OCI-LY7 (cell line): ENCODE measurements at regions of chr17 and their contacts with region 1.

Region 1: GRCh38 chr17:51238255-51238887 is 21.5 kb downstream of the MBTD1 start:
- DNase-seq: peak; percentile 78
- H3K4me3 ChIP-seq: peak overlapping the region; percentile 58
- H3K27ac ChIP-seq: peak overlapping the region; percentile 84
- H3K4me1 ChIP-seq: peaks cover 56% of the 10 kb centered on the region
- CTCF ChIP-seq: no peak

Region 2: DNA sequence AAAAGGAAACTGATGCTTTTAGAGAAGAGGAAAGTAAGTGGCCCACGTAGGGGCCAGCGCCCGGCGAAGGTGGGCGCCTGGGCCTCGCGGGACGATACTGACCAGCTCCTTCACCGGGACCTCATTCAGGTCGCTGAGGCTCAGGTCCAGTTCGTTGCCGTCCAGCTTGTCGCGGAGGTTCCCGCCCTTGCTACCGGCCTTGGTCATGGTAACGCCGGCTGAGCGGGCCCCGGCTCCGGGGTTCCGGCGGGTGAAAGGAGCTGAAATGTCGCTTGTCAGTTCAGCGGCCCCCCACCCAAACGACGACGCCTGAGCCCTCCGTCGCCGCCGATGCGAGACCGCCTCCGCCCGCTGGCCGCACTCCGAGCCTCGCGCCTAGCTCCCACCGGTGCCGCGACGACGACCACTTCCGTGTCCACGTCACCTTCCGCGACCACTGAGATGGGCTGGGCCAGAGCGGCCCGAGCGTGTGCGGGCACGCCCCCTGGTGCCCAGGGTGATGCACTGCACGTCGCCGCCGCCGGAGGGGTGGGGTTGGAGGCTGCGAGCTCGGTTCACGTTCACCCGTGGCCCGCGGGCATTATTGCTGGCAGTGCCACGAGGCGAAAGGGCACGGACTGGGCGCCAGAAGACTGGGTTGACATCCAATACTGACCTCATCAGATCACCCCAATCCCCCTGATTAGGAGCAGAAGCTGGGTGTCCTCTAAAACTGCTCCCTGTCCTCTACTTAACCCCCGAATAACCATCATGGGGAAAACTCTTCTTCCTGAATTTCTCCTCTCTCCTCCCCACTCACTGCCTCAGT is 841.1 kb before region 1 on chr17 and contains the start of gene LRRC59:
- CTCF ChIA-PET with region 1: no interaction called
- POLR2A ChIA-PET with region 1: no interaction called
- intact Hi-C with region 1: no loop called
- DNase-seq: peak; percentile 90
- H3K4me3 ChIP-seq: peak within 1 kb of the TSS; percentile 84
- H3K27ac ChIP-seq: peak within 1 kb of the TSS; percentile 4
- H3K4me1 ChIP-seq: peaks cover 24% of the 10 kb centered on the region
- CTCF ChIP-seq: peak; percentile 82
- total RNA-seq, gene LRRC59: 81.9 and 87.4 TPM in 2 replicates

Region 3: GRCh38 chr17:51188271-51188833 is 50.0 kb before region 1 on chr17:
- CTCF ChIA-PET with region 1: no interaction called
- POLR2A ChIA-PET with region 1: interaction called, 11 read pairs
- intact Hi-C with region 1: no loop called
- DNase-seq: no peak
- H3K4me3 ChIP-seq: no peak overlapping the region
- H3K27ac ChIP-seq: no peak overlapping the region
- H3K4me1 ChIP-seq: no peaks in the 10 kb centered on the region
- CTCF ChIP-seq: no peak

Region 4: DNA sequence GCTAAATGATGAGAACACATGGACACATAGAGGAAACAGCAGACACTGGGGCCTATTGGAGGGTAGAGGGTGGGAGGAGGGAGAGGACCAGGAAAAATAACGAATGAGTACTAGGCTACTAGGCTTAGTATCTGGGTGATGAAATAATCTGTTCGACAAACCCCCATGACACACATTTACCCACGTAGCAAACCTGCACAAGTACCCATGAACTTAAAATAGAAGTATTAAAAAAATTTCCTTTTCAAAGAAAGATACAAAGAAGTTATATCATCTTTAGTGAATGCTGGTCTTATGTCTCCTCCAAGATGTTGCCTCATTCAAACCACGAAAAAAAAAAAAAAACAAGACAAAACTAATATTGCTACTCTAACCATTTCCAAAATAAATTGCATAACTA is 10.2 kb before region 1 on chr17:
- CTCF ChIA-PET with region 1: interaction called, 3 read pairs
- POLR2A ChIA-PET with region 1: interaction called, 24 read pairs
- intact Hi-C with region 1: loop called (anchors 1 kb)
- DNase-seq: no peak
- H3K4me3 ChIP-seq: peak overlapping the region; percentile 13
- H3K27ac ChIP-seq: peak overlapping the region; percentile 88
- H3K4me1 ChIP-seq: peaks cover 89% of the 10 kb centered on the region
- CTCF ChIP-seq: no peak